Posterior vena cava (tissue), 2 donors: ENCODE measurements at regions of chr11 and their contacts with region 1.

Region 1: DNA sequence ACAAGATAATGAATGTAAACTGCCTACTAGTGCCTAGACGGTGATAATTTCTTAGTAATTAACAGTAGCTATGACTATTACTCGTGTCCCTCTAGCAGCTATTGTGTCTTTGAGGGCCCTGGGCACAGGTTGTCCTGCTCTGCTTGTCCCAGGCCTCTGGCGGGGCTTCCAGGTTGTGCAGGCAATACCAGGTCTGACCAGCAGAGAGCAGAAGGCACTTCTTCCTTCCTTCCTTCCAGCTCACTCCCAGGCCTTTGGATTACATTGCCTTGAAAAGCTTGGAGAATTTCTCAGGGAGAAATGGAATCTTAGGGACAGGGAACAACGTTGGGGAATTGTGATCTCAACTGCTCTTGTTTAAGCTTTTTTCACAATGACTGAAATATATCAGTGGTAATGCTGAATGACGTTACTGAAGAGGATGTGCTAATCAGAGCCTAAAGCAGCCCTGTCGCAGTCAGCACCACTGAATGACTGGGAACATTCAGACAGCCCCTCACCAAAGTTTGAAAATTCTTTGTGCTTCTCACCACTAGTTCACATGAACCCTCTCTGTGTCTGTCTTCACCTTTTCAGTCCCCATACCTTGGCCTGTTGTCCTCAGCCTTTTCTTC is 8.4 kb upstream of the CCKBR start:
- DNase-seq: peak; percentile 82

Region 2: DNA sequence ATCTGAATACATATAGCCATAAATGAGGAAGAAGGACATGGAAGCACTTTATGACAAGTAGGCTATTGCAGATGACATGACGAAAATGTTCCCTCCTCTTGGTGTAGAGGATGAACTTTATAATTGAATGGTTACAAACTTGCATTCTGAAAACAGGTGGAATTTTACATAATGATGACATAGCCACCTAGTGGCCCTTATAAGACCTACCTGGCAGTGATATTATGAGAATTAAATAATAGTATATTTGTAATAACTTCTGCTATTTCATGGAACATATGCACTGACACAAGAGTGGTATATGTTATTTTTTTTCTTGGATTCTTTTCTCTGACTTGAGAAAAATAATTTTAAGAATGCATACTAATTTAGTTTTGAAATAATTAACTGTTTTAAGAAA is 538.7 kb before region 1 on chr11:
- intact Hi-C with region 1: no loop called
- DNase-seq: no peak

Region 3: GRCh38 chr11:6285019-6285418 is 33.8 kb after region 1 on chr11:
- intact Hi-C with region 1: no loop called
- DNase-seq: no peak

Region 4: GRCh38 chr11:6315811-6316425 is 64.7 kb after region 1 on chr11:
- intact Hi-C with region 1: loop called in 1 of 2 experiments (anchors 10 kb)
- DNase-seq: peak; percentile 87